Endothelial cell of umbilical vein (primary cell): ENCODE measurements at regions of chr12 and their contacts with region 1.

Region 1: DNA sequence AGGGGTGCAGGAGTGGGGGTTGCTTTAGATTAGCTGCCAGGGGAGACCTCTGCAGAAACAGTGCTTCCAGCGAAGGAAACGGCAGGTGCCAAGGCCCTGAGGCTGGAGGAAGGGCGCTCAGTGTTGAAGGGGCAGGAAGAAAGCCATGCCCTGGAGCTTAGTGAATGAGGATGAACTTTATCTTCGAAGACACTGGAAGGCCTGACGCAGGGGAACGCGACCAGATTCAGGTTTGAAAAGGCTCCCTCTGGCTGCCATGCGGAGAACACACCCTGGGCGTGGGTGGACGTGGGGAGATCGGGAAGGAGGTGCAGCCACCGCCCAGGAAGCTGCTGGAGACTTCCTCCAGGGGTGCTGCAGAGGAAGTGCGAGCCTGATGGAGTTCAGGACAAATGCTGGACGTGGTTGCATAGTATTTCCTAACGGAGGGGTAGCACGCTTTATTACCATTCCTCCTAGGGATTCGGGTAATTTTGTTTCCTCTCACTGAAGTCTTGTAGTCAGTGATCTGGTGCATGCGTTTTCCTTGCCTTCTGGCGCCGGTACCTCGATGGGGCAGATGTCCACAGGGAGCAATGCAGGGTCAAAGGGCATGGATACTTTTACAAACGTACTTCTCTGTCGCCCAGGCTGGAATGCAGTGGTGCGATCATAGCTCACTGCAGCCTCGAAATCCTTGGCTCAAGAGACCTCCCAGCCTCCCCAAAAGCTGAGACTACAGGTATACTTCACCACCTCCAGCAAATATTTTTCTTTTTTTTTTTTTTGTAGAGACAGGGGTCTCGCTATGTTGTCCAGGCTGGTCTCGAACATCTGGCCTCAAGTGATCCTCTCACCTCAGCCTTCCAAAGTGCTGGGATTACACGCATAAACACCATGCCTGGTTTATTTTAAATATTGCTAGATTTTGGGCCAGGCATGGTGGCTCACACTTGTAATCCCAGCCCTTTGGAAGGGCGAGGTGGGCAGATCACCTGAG is 26.4 kb upstream of the UBC start:
- DNase-seq: peak; percentile 80
- H3K4me3 ChIP-seq: peak overlapping the region in 1 of 3 experiments; percentile 10
- H3K27ac ChIP-seq: peak overlapping the region; percentile 14
- H3K4me1 ChIP-seq: peaks cover 26% of the 10 kb centered on the region
- H3K27me3 ChIP-seq: no peaks in the 10 kb centered on the region
- CTCF ChIP-seq: peak; percentile 85 to 91
- POLR2A ChIP-seq: no peak

Region 2: DNA sequence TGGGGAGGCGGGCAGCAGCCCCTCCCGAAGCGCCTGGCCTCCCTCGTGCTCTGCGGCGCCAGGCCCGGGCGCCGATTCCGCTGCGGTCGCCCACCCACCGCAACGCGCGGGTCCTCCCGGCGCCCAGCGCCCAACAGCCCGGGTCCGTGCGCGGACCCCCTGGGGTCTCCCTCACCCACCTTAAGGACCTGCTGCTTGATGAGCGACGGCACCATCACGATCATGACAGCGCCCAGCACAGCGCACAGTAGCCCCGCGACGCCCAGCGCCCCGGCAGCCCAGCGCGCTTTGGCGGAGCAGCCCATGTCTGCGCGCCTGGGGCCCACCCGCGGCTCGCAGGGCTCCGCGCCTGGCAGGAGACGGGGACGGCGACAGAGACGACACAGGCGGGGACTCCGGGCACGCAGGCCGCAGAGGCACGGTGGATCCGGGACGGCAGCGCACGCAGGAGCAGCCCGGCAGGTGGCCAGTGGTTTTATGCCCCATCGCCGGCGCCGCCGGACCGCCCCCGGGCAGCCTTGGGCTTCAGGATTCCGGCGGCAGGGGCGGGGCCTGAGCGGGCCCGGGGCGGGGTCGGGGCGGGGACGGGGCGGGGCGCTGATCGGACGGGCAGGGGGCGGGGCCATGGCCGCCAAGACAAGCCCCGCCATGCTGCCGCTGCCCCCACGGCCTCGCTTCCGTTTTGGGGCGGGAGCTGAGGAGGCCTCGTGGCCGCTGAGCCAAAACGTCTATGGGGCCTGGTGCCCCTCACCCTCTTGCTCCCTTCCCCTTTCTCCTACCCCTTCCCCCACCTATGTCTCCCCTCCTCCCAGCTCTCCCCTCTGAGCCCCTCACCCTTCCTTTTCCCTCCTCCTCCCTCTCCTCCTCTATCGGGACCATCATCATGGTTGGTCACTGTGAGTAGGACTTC is 77.2 kb before region 1 on chr12 and contains the start of gene SCARB1:
- CTCF ChIA-PET with region 1: no interaction called
- POLR2A ChIA-PET with region 1: no interaction called
- dilution Hi-C with region 1: no loop called
- intact Hi-C with region 1: loop called (anchors 1 kb)
- DNase-seq: peak; percentile 71
- H3K4me3 ChIP-seq: peak within 1 kb of the TSS; percentile 16 to 73 (median 30)
- H3K27ac ChIP-seq: peak within 1 kb of the TSS; percentile 58
- H3K4me1 ChIP-seq: peaks cover 24% of the 10 kb centered on the region
- H3K27me3 ChIP-seq: no peaks in the 10 kb centered on the region
- CTCF ChIP-seq: peak in 1 of 2 donors; percentile 3
- POLR2A ChIP-seq: peak; percentile 82
- total RNA-seq, gene SCARB1: 125 TPM in 2 replicates

Region 3: GRCh38 chr12:124906606-124907261 is 34.1 kb before region 1 on chr12:
- CTCF ChIA-PET with region 1: interaction called, 232 read pairs
- POLR2A ChIA-PET with region 1: interaction called, 15 read pairs
- dilution Hi-C with region 1: no loop called
- intact Hi-C with region 1: loop called (anchors 1 kb)
- DNase-seq: peak; percentile 95
- H3K4me3 ChIP-seq: no peak overlapping the region
- H3K27ac ChIP-seq: no peak overlapping the region
- H3K4me1 ChIP-seq: peaks cover 22% of the 10 kb centered on the region
- H3K27me3 ChIP-seq: no peaks in the 10 kb centered on the region
- CTCF ChIP-seq: peak; percentile 90 to 97
- POLR2A ChIP-seq: peak; percentile 22

Region 4: GRCh38 chr12:124917135-124917840 is 23.6 kb before region 1 on chr12:
- CTCF ChIA-PET with region 1: interaction called, 64 read pairs
- POLR2A ChIA-PET with region 1: interaction called, 46 read pairs
- dilution Hi-C with region 1: no loop called
- intact Hi-C with region 1: loop called (anchors 1 kb)
- DNase-seq: peak; percentile 100
- H3K4me3 ChIP-seq: peak overlapping the region; percentile 7 to 63 (median 21)
- H3K27ac ChIP-seq: peak overlapping the region; percentile 95
- H3K4me1 ChIP-seq: peaks cover 58% of the 10 kb centered on the region
- H3K27me3 ChIP-seq: no peaks in the 10 kb centered on the region
- CTCF ChIP-seq: no peak
- POLR2A ChIP-seq: no peak

Region 5: DNA sequence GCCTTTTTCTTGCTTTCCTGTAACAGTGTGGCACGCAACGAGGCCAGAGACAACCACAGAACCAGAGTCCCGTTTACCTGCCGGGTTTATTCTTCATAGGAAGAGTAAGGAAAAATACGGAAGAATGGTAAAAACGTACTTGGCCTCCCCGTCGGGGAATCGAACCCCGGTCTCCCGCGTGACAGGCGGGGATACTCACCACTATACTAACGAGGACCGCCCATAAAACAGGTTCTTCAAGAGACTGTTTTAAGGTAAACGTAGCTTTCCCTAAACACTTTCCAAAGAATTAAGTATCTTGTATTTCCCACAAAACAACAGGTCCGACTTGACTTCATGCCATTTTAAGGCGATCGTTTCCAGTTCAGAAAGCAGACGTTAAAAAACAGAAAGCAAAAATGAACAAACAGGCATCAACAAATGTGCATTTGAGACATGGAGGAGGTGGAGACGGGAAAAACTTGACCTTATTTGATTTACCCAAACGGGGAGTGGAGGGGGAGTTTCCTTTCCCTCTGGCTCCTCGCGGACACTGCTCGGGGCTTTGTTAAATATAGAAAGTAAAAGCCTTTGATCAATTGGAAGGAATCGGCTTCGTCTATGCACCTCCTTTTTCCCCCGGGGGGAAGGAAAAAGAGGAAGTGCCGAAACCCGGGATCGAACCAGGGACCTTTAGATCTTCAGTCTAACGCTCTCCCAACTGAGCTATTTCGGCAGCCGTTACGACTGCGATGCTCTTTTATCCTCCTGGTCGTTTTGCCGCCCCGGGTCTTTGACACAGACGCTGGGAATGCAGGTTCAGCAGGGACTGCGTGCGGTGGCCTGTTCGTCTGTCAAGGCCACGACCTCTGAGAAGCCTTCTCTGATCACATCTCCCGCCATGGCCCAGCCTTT is 13.4 kb before region 1 on chr12:
- CTCF ChIA-PET with region 1: interaction called, 42 read pairs
- POLR2A ChIA-PET with region 1: interaction called, 8 read pairs
- dilution Hi-C with region 1: no loop called
- intact Hi-C with region 1: loop called (anchors 1 kb)
- DNase-seq: peak; percentile 95
- H3K4me3 ChIP-seq: peak overlapping the region; percentile 55 to 85 (median 74)
- H3K27ac ChIP-seq: peak overlapping the region; percentile 93
- H3K4me1 ChIP-seq: peaks cover 14% of the 10 kb centered on the region
- H3K27me3 ChIP-seq: no peaks in the 10 kb centered on the region
- CTCF ChIP-seq: no peak
- POLR2A ChIP-seq: peak; percentile 21

Region 6: DNA sequence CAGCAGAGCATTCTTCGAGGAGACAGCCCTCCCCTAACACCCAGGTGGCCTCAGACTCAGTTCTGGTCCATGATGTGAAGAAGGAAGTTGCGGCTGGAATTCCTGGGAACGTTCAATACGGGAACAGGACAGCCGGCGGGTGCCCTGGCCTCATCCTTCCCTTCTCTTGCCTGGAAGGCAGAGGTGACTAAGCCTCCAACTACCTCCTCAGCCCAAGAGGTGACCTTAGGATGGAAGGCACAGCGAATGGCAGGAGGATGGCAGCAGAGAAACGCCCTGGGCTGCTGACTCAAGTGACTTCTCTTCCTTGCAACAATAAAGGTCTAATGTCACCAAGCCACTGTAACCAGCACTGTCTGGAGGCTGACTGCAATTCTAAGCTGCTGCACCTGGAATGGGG is 12.0 kb after region 1 on chr12:
- CTCF ChIA-PET with region 1: interaction called, 11 read pairs
- POLR2A ChIA-PET with region 1: interaction called, 4 read pairs
- dilution Hi-C with region 1: no loop called
- intact Hi-C with region 1: no loop called
- DNase-seq: no peak
- H3K4me3 ChIP-seq: no peak overlapping the region
- H3K27ac ChIP-seq: no peak overlapping the region
- H3K4me1 ChIP-seq: no peaks in the 10 kb centered on the region
- H3K27me3 ChIP-seq: no peaks in the 10 kb centered on the region
- CTCF ChIP-seq: no peak
- POLR2A ChIP-seq: no peak

Region 7: DNA sequence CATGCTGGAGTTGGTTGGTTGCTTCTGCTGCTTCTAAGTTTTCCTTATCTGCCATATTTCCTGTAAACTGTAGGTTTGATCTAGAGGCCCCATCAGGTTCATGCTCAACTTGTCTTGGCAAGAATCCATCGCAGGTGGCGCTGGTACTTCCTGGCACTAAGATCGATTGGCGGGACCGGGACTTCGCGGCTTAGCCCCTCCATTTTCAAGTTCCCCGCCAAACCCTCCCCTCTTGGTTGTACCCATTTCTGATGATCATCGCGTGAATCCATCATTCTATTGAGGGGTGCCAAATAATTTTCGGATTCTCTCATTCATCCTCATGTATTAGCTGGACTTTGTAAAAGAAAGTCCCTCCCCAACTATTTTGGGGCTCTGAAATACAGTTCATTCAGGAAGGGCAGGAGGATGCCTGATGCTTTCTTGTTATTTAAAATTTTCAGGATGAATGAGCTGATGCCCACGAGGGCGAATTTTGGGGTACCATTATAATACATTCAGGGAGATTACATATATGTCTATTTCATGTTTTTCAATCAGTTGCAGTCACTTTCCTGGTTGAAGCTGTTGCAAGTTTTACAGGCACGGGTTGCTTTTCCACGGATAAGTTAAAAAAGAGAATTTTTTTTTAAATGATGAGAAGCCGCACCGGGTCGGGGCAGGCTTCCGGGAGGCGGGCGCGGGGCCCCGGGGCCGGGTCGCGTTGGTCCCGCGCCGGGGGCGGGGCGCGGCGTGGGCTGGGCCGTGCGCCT is 52.2 kb after region 1 on chr12:
- CTCF ChIA-PET with region 1: no interaction called
- POLR2A ChIA-PET with region 1: no interaction called
- dilution Hi-C with region 1: no loop called
- intact Hi-C with region 1: loop called (anchors 1 kb)
- DNase-seq: peak; percentile 52
- H3K4me3 ChIP-seq: peak overlapping the region; percentile 54 to 79 (median 78)
- H3K27ac ChIP-seq: no peak overlapping the region
- H3K4me1 ChIP-seq: peaks cover 23% of the 10 kb centered on the region
- H3K27me3 ChIP-seq: no peaks in the 10 kb centered on the region
- CTCF ChIP-seq: peak in 1 of 2 donors; percentile 20
- POLR2A ChIP-seq: no peak